ENCODE measurements at regions of chr13 and their contacts with region 1.

Region 1: GRCh38 chr13:49278211-49278610 is 30.5 kb downstream of the CDADC1 start:
- DNase-seq: no peak
- ATAC-seq: no peak
- H3K4me3 ChIP-seq: no peak overlapping the region
- H3K27ac ChIP-seq: no peak overlapping the region
- H3K4me1 ChIP-seq: no peaks in the 10 kb centered on the region
- H3K27me3 ChIP-seq: no peaks in the 10 kb centered on the region
- CTCF ChIP-seq: no peak
- EP300 ChIP-seq: no peak
- POLR2A ChIP-seq: no peak
- RAD21 ChIP-seq: no peak

Region 2: GRCh38 chr13:48595431-48596429 is 682.5 kb before region 1 on chr13:
- CTCF ChIA-PET with region 1: no interaction called
- POLR2A ChIA-PET with region 1: no interaction called
- RAD21 ChIA-PET with region 1: no interaction called
- SMC1A ChIA-PET with region 1: no interaction called
- in situ Hi-C with region 1: no loop called
- intact Hi-C with region 1: loop called (anchors 5 kb)
- DNase-seq: no peak
- ATAC-seq: peak; percentile 88
- H3K4me3 ChIP-seq: no peak overlapping the region
- H3K27ac ChIP-seq: no peak overlapping the region
- H3K4me1 ChIP-seq: peaks cover 16% of the 10 kb centered on the region
- H3K27me3 ChIP-seq: no peaks in the 10 kb centered on the region; a peak in 1 of 4 replicates
- CTCF ChIP-seq: peak; percentile 57 to 81 (median 69); a peak in 5 of 6 replicates
- EP300 ChIP-seq: no peak
- POLR2A ChIP-seq: no peak
- RAD21 ChIP-seq: peak; percentile 79

Region 3: GRCh38 chr13:49098771-49099512 is 179.3 kb before region 1 on chr13:
- CTCF ChIA-PET with region 1: interaction called, 28 read pairs
- POLR2A ChIA-PET with region 1: no interaction called
- RAD21 ChIA-PET with region 1: interaction called, 16 read pairs
- SMC1A ChIA-PET with region 1: interaction called, 14 read pairs
- in situ Hi-C with region 1: no loop called
- intact Hi-C with region 1: loop called (anchors 1 kb)
- DNase-seq: no peak
- ATAC-seq: peak; percentile 87
- H3K4me3 ChIP-seq: no peak overlapping the region
- H3K27ac ChIP-seq: peak overlapping the region; percentile 11; the same call in 1 of the 2 replicates
- H3K4me1 ChIP-seq: peaks cover 20% of the 10 kb centered on the region
- H3K27me3 ChIP-seq: no peaks in the 10 kb centered on the region
- CTCF ChIP-seq: peak; percentile 35 to 56 (median 46); a peak in 5 of 6 replicates
- EP300 ChIP-seq: no peak
- POLR2A ChIP-seq: no peak
- RAD21 ChIP-seq: peak; percentile 63

Region 4: GRCh38 chr13:49240017-49240416 is 38.2 kb before region 1 on chr13:
- CTCF ChIA-PET with region 1: interaction called, 39 read pairs
- POLR2A ChIA-PET with region 1: no interaction called
- RAD21 ChIA-PET with region 1: interaction called, 13 read pairs
- SMC1A ChIA-PET with region 1: interaction called, 11 read pairs
- in situ Hi-C with region 1: no loop called
- intact Hi-C with region 1: loop called (anchors 5 kb)
- DNase-seq: no peak
- ATAC-seq: peak; percentile 92
- H3K4me3 ChIP-seq: no peak overlapping the region
- H3K27ac ChIP-seq: no peak overlapping the region
- H3K4me1 ChIP-seq: no peaks in the 10 kb centered on the region
- H3K27me3 ChIP-seq: no peaks in the 10 kb centered on the region; a peak in 2 of 4 replicates
- CTCF ChIP-seq: peak; percentile 63 to 70 (median 65)
- EP300 ChIP-seq: no peak
- POLR2A ChIP-seq: no peak
- RAD21 ChIP-seq: peak; percentile 63

Region 5: GRCh38 chr13:49247643-49248621 is 30.3 kb before region 1 on chr13 and contains the start of gene CDADC1:
- CTCF ChIA-PET with region 1: interaction called, 24 read pairs
- POLR2A ChIA-PET with region 1: no interaction called
- RAD21 ChIA-PET with region 1: interaction called, 14 read pairs
- SMC1A ChIA-PET with region 1: interaction called, 6 read pairs
- in situ Hi-C with region 1: no loop called
- intact Hi-C with region 1: loop called (anchors 5 kb)
- DNase-seq: peak; percentile 65
- ATAC-seq: peak; percentile 95
- H3K4me3 ChIP-seq: peak within 1 kb of the TSS; percentile 93
- H3K27ac ChIP-seq: peak within 1 kb of the TSS; percentile 78
- H3K4me1 ChIP-seq: no peaks in the 10 kb centered on the region
- H3K27me3 ChIP-seq: no peaks in the 10 kb centered on the region; a peak in 1 of 4 replicates
- CTCF ChIP-seq: no peak
- EP300 ChIP-seq: no peak
- POLR2A ChIP-seq: peak; percentile 93
- RAD21 ChIP-seq: no peak
- polyA plus RNA-seq, gene CDADC1: 6.3 to 7.3 TPM

Region 6: DNA sequence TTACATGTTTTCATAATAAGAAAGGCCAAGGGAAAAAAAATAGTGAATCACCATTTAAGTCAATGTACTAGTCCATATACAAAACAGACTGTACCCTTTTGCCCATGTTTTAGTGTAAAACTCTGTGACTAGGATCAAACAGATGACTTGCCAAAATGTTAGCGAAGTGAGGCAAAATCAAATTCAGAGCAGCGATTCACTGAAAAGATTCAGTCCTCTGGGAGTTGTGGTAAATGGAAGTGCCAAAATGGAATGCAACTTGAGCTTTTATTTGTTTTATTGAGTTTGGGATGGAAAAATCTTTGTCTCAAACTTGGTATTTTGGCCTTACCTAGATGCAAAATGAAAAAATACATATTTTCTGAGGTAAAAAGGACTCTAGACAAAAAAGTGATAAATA is 21.4 kb before region 1 on chr13:
- CTCF ChIA-PET with region 1: interaction called, 13 read pairs
- POLR2A ChIA-PET with region 1: no interaction called
- RAD21 ChIA-PET with region 1: no interaction called
- SMC1A ChIA-PET with region 1: interaction called, 3 read pairs
- in situ Hi-C with region 1: no loop called
- intact Hi-C with region 1: no loop called
- DNase-seq: no peak
- ATAC-seq: no peak
- H3K4me3 ChIP-seq: no peak overlapping the region
- H3K27ac ChIP-seq: no peak overlapping the region
- H3K4me1 ChIP-seq: no peaks in the 10 kb centered on the region
- H3K27me3 ChIP-seq: no peaks in the 10 kb centered on the region
- CTCF ChIP-seq: no peak
- EP300 ChIP-seq: no peak
- POLR2A ChIP-seq: no peak
- RAD21 ChIP-seq: no peak

Region 7: GRCh38 chr13:49265822-49266221 is 12.4 kb before region 1 on chr13:
- CTCF ChIA-PET with region 1: interaction called, 17 read pairs
- POLR2A ChIA-PET with region 1: no interaction called
- RAD21 ChIA-PET with region 1: interaction called, 3 read pairs
- SMC1A ChIA-PET with region 1: interaction called, 10 read pairs
- in situ Hi-C with region 1: no loop called
- intact Hi-C with region 1: no loop called
- DNase-seq: no peak
- ATAC-seq: no peak
- H3K4me3 ChIP-seq: no peak overlapping the region
- H3K27ac ChIP-seq: no peak overlapping the region
- H3K4me1 ChIP-seq: no peaks in the 10 kb centered on the region
- H3K27me3 ChIP-seq: no peaks in the 10 kb centered on the region
- CTCF ChIP-seq: no peak
- EP300 ChIP-seq: no peak
- POLR2A ChIP-seq: no peak
- RAD21 ChIP-seq: no peak

Region 8: DNA sequence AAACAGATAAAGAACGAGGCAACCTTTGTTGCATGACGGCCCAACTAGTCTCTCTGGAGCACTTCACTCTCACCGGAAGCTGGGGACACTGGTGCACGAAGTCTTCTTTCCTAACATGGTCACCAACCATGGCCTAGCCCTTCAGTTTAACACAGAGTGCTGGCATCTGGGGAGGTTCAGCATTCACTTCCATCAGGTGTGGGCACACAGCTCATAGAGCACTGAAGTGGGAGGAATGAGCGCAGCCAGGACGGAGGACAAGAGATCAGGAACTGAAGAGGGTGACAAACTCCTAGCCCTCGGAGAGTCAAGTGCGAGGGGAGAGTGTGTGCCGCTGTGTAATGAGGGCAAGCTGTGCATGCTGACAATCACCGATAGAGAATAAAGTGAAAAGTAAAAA is 62.0 kb after region 1 on chr13:
- CTCF ChIA-PET with region 1: no interaction called
- POLR2A ChIA-PET with region 1: no interaction called
- RAD21 ChIA-PET with region 1: no interaction called
- SMC1A ChIA-PET with region 1: no interaction called
- in situ Hi-C with region 1: no loop called
- intact Hi-C with region 1: no loop called
- DNase-seq: no peak
- ATAC-seq: no peak
- H3K4me3 ChIP-seq: no peak overlapping the region
- H3K27ac ChIP-seq: no peak overlapping the region
- H3K4me1 ChIP-seq: no peaks in the 10 kb centered on the region
- H3K27me3 ChIP-seq: no peaks in the 10 kb centered on the region
- CTCF ChIP-seq: no peak
- EP300 ChIP-seq: no peak
- POLR2A ChIP-seq: no peak
- RAD21 ChIP-seq: no peak

Region 9: GRCh38 chr13:50290186-50290585 is 1012.0 kb after region 1 on chr13:
- CTCF ChIA-PET with region 1: no interaction called
- POLR2A ChIA-PET with region 1: no interaction called
- RAD21 ChIA-PET with region 1: no interaction called
- SMC1A ChIA-PET with region 1: no interaction called
- in situ Hi-C with region 1: no loop called
- intact Hi-C with region 1: no loop called
- DNase-seq: no peak
- ATAC-seq: no peak
- H3K4me3 ChIP-seq: no peak overlapping the region
- H3K27ac ChIP-seq: no peak overlapping the region
- H3K4me1 ChIP-seq: peaks cover 2% of the 10 kb centered on the region; the same call in 1 of the 2 replicates
- H3K27me3 ChIP-seq: peaks cover 0 to 7% of the 10 kb centered on the region in 2 experiments; a peak in 3 of 4 replicates
- CTCF ChIP-seq: no peak
- EP300 ChIP-seq: no peak
- POLR2A ChIP-seq: no peak
- RAD21 ChIP-seq: no peak